ENCODE measurements at regions of chr11 and their contacts with region 1.

Region 1: GRCh38 chr11:61254403-61255025 is 13.5 kb downstream of the PGA5 start:
- DNase-seq: peak; percentile 80
- H3K4me3 Mint-ChIP-seq: no peak overlapping the region
- H3K27ac Mint-ChIP-seq: no peak overlapping the region
- H3K4me1 Mint-ChIP-seq: no peaks in the 10 kb centered on the region
- H3K27me3 Mint-ChIP-seq: no peaks in the 10 kb centered on the region

Region 2: GRCh38 chr11:61273176-61274078 is 18.9 kb after region 1 on chr11:
- CTCF ChIA-PET with region 1: no interaction called
- POLR2A ChIA-PET with region 1: no interaction called
- intact Hi-C with region 1: no loop called
- DNase-seq: no peak
- H3K4me3 Mint-ChIP-seq: no peak overlapping the region
- H3K27ac Mint-ChIP-seq: no peak overlapping the region
- H3K4me1 Mint-ChIP-seq: peaks cover 6% of the 10 kb centered on the region
- H3K27me3 Mint-ChIP-seq: peaks cover 2% of the 10 kb centered on the region

Region 3: DNA sequence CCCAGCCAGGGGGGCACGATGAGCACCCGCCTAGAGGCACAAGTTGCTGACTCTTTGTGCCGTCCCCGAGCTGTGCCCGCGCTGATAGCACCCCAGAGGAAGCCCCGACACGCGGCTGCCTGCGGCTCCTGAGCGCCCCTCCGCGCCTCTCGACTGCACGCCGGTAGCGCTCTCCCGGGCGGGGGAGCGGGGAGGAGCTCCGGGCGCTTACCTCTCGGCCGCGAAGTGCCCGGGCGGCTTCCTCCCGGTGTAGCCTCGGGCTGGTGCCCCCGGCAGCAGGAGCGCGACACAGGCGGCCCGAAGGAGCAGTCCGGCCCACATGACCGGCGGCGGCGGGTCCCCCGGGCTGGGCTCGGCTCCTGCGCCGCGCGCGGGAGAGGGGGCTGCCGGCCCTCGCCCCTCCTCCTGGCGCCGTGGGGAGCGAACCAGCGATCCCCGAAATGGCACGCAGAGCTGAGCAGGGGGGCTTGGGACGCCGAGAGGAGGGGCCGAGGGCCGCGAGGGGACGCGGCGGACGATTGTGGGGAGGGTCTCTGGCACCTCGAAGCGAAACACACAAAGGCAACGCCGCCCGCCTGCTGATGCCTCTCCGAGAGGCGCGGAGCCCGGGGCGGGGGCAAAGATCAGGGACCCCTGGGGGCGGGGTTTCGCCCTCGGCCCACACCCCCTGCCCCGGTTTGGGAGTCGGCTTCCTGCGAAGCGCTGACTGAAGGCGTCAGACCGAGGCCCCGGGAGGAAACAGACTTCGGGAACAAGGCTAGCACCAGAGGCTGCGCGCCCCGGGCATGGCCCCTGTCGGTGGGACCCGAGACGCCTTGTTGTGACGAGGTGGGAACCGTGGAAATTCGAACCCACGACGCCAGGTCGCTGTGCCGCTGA is 40.4 kb after region 1 on chr11 and contains the start of gene VWCE:
- CTCF ChIA-PET with region 1: interaction called, 48 read pairs
- POLR2A ChIA-PET with region 1: interaction called, 3 read pairs
- intact Hi-C with region 1: loop called (anchors 1 kb)
- DNase-seq: peak; percentile 81
- H3K4me3 Mint-ChIP-seq: peak within 1 kb of the TSS; percentile 72
- H3K27ac Mint-ChIP-seq: no peak within 1 kb of the TSS
- H3K4me1 Mint-ChIP-seq: peaks cover 32% of the 10 kb centered on the region
- H3K27me3 Mint-ChIP-seq: peaks cover 19% of the 10 kb centered on the region
- total RNA-seq, gene VWCE: 1.1 to 1.4 TPM